Dendritic cell treated with granulocyte-macrophage colony-stimulating factor and Interleukin-4, amounts not matched to agents 40 ng/mL and 50 ng/mL, for 4 days (primary cell): ENCODE measurements at regions of chr11 and their contacts with region 1.

Region 1: DNA sequence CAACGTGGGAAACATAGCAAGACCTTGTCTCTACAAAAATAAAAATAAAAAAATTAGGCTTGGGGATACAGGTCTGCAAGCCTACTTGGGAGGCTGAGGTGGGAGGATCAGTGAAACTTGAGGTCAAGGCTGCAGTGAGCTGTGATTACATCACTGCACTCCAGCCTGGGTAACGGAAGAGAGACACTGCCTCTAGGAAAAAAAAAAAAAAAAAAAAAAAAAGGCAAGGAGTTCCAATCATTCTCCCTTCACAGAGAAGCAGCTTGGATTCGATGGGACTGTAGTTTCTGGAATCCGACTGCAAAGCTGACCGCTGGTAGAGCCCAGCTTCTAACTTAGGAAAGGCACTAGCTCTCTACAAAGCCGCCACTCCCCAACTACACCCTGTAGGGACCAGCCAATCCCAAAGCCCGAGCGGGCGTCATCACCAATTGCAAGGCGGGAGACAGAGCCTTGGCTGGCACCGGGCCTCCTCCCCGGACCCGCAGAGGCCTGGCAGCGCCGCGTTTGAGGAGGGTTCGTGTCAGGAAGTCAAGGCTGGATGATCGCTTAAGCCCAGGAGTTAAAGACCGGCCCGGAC is 699 bp upstream of the DDB2 start:
- H3K4me3 Mint-ChIP-seq: peak overlapping the region; percentile 98
- H3K27ac Mint-ChIP-seq: peak overlapping the region; percentile 96
- H3K4me1 Mint-ChIP-seq: peaks cover 38% of the 10 kb centered on the region
- H3K27me3 Mint-ChIP-seq: no peaks in the 10 kb centered on the region

Region 2: DNA sequence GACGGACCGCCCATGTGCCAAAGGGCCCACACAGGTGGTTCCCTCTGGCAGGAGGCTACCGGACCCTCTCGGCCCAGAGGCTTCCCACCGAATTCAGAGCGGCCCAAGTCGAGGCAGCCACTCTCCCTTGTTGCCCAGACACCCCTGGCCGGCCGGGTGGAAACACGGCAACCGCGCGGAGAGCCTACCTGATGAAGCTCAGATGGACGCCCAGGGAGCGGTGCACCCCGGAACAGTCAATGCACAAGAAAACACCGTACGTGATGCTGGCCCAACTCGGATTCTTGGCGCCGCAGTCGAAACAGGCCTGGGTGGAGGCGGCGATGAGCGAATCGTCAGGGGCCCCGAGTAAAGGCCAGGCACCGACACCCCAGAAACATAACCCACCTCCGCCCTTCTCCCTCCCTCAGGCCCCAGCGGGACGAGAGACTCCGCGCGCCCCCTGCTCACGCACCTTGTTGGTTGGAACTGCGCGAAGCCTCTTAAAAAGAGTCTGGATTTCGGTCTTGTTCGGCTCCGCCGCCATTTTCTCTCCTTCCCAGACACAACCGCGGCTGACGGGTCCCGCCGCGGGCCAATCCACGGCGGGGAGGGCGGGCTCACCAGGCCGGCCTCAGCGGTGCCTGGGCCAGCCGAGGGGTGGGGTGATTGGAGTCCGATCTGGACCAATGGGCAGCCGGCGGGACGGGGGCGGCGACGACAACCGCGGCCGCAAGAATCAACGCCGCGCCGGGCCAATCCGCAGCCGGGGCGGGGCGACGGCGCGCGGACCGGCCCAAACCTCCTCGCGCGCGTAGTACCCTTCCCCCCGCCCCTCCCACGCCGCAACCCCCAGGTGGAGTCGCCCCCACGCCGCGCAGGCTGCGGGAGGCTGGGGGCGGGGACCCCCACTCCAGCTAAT is 37.5 kb before region 1 on chr11 and contains the start of gene ARFGAP2:
- intact Hi-C with region 1: loop called (anchors 1 kb)
- H3K4me3 Mint-ChIP-seq: peak within 1 kb of the TSS; percentile 98
- H3K27ac Mint-ChIP-seq: peak within 1 kb of the TSS; percentile 91
- H3K4me1 Mint-ChIP-seq: peaks cover 50% of the 10 kb centered on the region
- H3K27me3 Mint-ChIP-seq: no peaks in the 10 kb centered on the region

Region 3: GRCh38 chr11:47259178-47259977 is 45.3 kb after region 1 on chr11:
- intact Hi-C with region 1: loop called (anchors 5 kb)
- H3K4me3 Mint-ChIP-seq: peak overlapping the region; percentile 43
- H3K27ac Mint-ChIP-seq: peak overlapping the region; percentile 55
- H3K4me1 Mint-ChIP-seq: peaks cover 43% of the 10 kb centered on the region
- H3K27me3 Mint-ChIP-seq: no peaks in the 10 kb centered on the region